Esophagus muscularis mucosa (tissue), 4 donors: ENCODE measurements at regions of chr16 and their contacts with region 1.

Region 1: DNA sequence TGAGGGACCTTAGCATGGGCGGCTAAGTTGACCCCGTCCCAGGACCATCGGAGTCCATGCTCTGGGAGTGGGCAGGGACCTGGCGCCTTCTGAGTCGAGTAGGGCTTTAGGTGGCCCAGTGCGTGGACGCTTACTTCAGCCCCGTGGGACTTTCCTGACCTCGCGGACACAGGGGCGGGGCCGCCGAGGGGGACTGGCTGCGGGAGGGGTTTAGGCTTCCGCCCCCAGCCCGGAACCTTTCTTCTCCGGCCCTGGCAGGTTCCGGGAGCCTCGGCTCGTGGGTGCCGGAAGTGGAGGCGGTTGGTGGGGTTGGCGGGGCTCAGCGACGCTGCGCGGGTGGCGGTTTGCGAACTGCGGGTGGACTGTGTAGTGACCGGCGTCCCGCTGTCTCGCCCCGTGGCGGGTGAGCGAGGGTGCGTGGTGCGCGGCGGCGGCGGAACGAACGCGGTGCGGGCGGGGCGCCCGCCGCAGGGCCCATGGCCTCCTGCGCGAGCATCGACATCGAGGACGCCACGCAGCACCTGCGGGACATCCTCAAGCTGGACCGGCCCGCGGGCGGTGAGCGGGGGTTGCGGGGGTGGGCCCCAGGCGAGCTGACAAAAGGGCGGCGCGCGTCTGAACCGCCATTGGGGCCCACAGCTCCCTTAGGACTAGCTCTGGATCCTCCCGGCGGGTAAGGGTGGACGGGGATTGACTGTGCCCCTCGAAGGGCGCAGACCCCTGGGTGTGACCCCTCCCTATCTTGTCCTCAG is at the start of gene EDC4:
- DNase-seq: peak; percentile 94
- H3K4me3 ChIP-seq: peak within 1 kb of the TSS; percentile 87 to 100 (median 96)
- H3K27ac ChIP-seq: peak within 1 kb of the TSS; percentile 83 to 91 (median 88)
- H3K4me1 ChIP-seq: peaks cover 26 to 49% (median 36%) of the 10 kb centered on the region in 4 donors
- H3K27me3 ChIP-seq: no peaks in the 10 kb centered on the region
- CTCF ChIP-seq: peak in 1 of 3 experiments; percentile 20
- EP300 ChIP-seq: no peak
- POLR2A ChIP-seq: peak; percentile 60
- total RNA-seq, gene EDC4: 49.9 to 70.9 (median 52.0) TPM

Region 2: GRCh38 chr16:67816240-67817031 is 56.5 kb before region 1 on chr16:
- intact Hi-C with region 1: loop called (anchors 5 kb)
- DNase-seq: peak; percentile 95
- H3K4me3 ChIP-seq: peak overlapping the region in 1 of 4 donors; percentile 4
- H3K27ac ChIP-seq: peak overlapping the region in 3 of 4 donors; percentile 10 to 57 (median 36)
- H3K4me1 ChIP-seq: peaks cover 0 to 9% (median 8%) of the 10 kb centered on the region in 4 donors
- H3K27me3 ChIP-seq: no peaks in the 10 kb centered on the region
- CTCF ChIP-seq: peak in 2 of 3 experiments; percentile 100
- EP300 ChIP-seq: no peak
- POLR2A ChIP-seq: no peak

Region 3: GRCh38 chr16:67828651-67829050 is 44.3 kb before region 1 on chr16:
- intact Hi-C with region 1: no loop called
- DNase-seq: no peak
- H3K4me3 ChIP-seq: no peak overlapping the region
- H3K27ac ChIP-seq: no peak overlapping the region
- H3K4me1 ChIP-seq: peaks cover 8 to 22% (median 13%) of the 10 kb centered on the region in 4 donors
- H3K27me3 ChIP-seq: no peaks in the 10 kb centered on the region
- CTCF ChIP-seq: no peak
- EP300 ChIP-seq: no peak
- POLR2A ChIP-seq: no peak